ENCODE measurements at regions of chr9 and their contacts with region 1.

Region 1: DNA sequence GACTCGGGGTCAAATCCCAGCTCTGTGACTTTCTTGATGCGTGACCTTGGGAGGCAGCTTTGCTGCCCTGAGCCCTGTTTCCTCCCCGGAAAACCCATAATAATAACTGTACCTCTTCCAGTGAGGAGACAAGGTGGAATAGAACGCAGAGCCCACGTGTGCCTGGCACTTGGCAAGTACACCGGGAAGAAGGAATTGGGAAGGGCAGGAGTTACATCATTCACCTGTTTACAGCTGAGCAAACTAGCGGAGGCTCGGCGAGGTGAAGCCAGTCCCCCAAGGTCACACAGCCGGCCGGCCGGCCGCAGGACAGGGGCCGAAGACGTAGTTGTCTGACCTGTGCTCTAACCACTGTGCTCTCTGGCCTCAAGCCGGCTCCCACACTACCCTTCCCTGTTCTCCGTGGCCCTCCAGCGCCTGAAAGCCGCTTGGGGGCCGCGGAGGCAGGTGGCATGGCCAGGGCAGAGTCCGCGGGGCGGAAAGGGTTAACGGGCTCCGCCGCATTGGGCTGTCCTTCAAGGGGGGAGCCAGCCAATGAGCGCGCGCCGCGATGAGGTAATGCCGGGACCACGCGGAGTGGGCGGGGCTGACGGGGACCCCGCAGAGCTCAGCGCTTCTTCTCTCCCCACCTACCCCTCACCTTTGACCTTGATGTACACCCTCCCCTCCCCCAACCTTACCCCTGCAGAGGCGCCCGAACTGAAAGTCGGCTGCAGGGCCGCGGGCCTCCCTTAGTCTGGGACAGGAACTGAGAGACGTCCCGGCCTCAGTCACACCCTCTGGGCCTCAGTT is 125.2 kb downstream of the C9orf50 start:
- DNase-seq: peak; percentile 66
- ATAC-seq: peak; percentile 80
- H3K4me3 Mint-ChIP-seq: peak overlapping the region; percentile 78
- H3K27ac Mint-ChIP-seq: no peak overlapping the region
- H3K4me1 Mint-ChIP-seq: peaks cover 17% of the 10 kb centered on the region
- H3K27me3 Mint-ChIP-seq: peaks cover 22% of the 10 kb centered on the region
- CTCF ChIP-seq: no peak

Region 2: GRCh38 chr9:129393064-129393463 is 102.7 kb before region 1 on chr9:
- CTCF ChIA-PET with region 1: no interaction called
- POLR2A ChIA-PET with region 1: no interaction called
- intact Hi-C with region 1: no loop called
- DNase-seq: no peak
- ATAC-seq: no peak
- H3K4me3 Mint-ChIP-seq: no peak overlapping the region
- H3K27ac Mint-ChIP-seq: no peak overlapping the region
- H3K4me1 Mint-ChIP-seq: no peaks in the 10 kb centered on the region
- H3K27me3 Mint-ChIP-seq: no peaks in the 10 kb centered on the region
- CTCF ChIP-seq: no peak

Region 3: DNA sequence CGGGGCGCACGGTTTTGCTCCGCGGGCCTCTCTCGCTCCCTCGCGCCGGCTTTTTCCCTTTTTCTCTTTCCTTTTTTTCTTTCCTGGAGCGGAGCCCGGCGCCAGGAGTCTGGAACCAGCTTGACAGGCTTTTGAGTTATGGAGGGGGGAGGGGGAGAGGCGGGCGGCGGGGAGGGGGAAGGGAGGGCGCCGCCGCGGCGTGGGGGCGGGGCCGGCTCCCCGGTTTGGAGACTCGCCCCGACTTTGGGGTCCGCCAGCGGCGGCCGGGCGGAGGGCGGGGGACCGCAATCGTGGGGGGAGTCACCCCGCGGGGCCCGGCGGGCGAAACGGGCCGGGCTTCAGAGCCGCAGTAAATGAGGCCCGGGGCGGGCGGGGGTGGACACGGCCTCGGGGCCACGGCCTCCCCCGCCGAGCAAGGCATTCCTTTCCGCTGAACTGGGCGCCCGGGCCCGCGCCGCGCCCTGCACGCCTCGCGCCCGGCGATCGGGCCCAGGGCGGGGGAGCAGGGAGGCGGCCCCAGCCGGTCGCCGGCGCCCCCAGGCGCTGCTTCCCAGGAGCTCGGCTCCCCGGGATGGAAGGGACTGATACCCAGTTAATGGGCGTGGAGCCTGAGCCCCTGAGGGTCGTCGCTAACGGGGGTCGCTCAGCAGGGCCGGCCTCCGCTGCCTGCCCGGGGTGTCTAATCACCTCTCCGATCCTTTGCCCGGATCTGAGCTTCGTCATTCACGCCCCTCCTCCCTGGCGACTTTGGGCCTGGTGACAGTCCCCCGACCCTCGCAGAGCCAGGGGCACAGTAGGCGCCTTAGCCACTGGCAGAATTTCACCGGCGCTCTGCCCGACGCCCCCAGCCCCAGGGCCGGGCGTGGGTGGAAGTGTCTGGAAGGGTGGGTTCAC is 13.0 kb before region 1 on chr9:
- CTCF ChIA-PET with region 1: no interaction called
- POLR2A ChIA-PET with region 1: interaction called, 33 read pairs
- intact Hi-C with region 1: no loop called
- DNase-seq: peak; percentile 41
- ATAC-seq: peak; percentile 36
- H3K4me3 Mint-ChIP-seq: peak overlapping the region; percentile 55
- H3K27ac Mint-ChIP-seq: no peak overlapping the region
- H3K4me1 Mint-ChIP-seq: peaks cover 24% of the 10 kb centered on the region
- H3K27me3 Mint-ChIP-seq: peaks cover 33% of the 10 kb centered on the region
- CTCF ChIP-seq: no peak

Measured in activated B cell treated with CpG ODN at 0.5 μM for 24 hours (primary cell).